Natural killer cell (primary cell): ENCODE measurements at regions of chr3 and their contacts with region 1.

Region 1: DNA sequence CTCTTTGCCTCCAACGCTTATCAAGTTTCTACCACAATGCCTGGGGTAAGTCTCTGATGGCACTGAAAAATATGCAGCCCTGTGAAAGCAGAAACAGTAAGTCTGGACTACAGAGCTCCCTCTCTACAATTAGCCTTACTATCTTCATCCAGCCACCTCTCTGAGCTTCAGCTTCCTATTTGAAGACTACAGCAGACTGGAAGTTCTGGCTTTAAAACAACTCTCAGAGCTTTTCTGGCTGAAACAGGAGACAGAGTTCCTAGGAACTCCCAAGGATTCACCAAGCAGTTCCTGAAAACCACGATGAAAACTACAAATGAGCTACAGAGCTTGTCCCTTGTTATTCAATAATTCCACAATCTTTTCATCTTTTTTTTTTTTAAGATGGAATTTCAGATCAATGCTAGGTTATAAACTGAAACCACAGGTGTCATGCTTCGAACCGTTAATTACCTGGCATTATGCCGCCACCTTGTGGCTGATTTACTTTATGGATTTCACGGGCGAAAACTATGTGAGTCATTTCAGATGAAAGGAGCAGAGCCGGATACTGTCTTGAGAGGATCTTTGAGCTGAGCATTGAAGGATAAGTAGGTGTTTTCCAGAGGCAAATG is 3.9 kb downstream of the CRYGS start:
- DNase-seq: peak; percentile 62 to 93
- ATAC-seq: peak; percentile 84 to 94 (median 94)
- H3K4me3 ChIP-seq: no peak overlapping the region
- H3K4me3 Mint-ChIP-seq: peak overlapping the region; percentile 26
- H3K27ac ChIP-seq: no peak overlapping the region
- H3K27ac Mint-ChIP-seq: peak overlapping the region in 1 of 2 donors; percentile 75
- H3K4me1 ChIP-seq: no peaks in the 10 kb centered on the region
- H3K4me1 Mint-ChIP-seq: peaks cover 8% of the 10 kb centered on the region in 2 donors
- H3K27me3 ChIP-seq: no peaks in the 10 kb centered on the region
- H3K27me3 Mint-ChIP-seq: no peaks in the 10 kb centered on the region
- CTCF ChIP-seq: peak; percentile 75

Region 2: GRCh38 chr3:185824476-185825378 is 715.6 kb before region 1 on chr3 and contains the start of gene IGF2BP2:
- intact Hi-C with region 1: no loop called
- DNase-seq: peak; percentile 51 to 55
- ATAC-seq: peak; percentile 67 to 78 (median 69)
- H3K4me3 ChIP-seq: peak within 1 kb of the TSS; percentile 61
- H3K4me3 Mint-ChIP-seq: peak within 1 kb of the TSS; percentile 92
- H3K27ac ChIP-seq: peak within 1 kb of the TSS; percentile 50
- H3K27ac Mint-ChIP-seq: peak within 1 kb of the TSS in 1 of 2 donors; percentile 82
- H3K4me1 ChIP-seq: peaks cover 23% of the 10 kb centered on the region
- H3K4me1 Mint-ChIP-seq: peaks cover 24 to 27% of the 10 kb centered on the region in 2 donors
- H3K27me3 ChIP-seq: peaks cover 32% of the 10 kb centered on the region
- H3K27me3 Mint-ChIP-seq: peaks cover 13 to 47% of the 10 kb centered on the region in 2 donors
- CTCF ChIP-seq: no peak
- total RNA-seq, gene IGF2BP2: 4.2 to 16.8 (median 8.8) TPM

Region 3: DNA sequence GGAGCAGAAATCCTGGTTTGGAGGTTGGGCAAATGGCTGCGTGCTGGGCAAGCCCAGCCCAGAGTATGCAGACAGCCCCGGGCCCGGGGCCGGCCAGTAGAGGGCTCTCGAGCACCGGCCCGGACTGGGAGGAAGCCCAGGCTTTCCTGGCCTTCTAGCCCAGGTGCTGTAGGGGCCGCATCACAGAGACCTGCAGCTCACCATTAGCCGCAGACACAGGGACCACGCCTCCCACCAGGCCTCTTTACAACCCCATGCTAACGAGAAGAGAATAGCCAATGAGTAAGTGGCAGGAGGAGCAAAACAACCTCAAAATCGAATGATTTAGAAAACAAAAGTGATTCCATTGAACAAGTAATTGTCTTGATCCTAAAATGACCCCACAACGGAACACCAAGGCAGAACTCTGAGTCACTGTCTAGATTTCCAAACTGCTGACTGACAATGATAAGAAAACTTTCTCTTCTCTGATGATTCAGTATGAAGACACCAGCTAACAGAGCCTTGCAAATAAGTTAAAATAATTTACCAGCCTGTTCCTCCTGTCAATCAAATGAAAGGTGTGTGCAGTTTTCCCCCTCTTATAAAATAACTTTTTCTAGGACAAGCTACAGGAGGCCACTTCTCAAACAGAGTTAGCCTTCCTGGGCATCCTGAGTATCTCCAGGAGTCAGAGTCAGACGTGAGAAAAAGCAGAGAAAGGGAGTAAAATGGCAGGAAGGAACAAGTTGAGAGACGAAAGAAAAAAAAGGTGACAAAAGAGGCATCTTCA is 280.5 kb before region 1 on chr3:
- intact Hi-C with region 1: loop called (anchors 1 kb)
- DNase-seq: peak; percentile 44 to 78
- ATAC-seq: peak; percentile 84 to 97 (median 97)
- H3K4me3 ChIP-seq: no peak overlapping the region
- H3K4me3 Mint-ChIP-seq: no peak overlapping the region
- H3K27ac ChIP-seq: no peak overlapping the region
- H3K27ac Mint-ChIP-seq: peak overlapping the region in 1 of 2 donors; percentile 29
- H3K4me1 ChIP-seq: peaks cover 22% of the 10 kb centered on the region
- H3K4me1 Mint-ChIP-seq: peaks cover 3 to 7% of the 10 kb centered on the region in 2 donors
- H3K27me3 ChIP-seq: no peaks in the 10 kb centered on the region
- H3K27me3 Mint-ChIP-seq: no peaks in the 10 kb centered on the region
- CTCF ChIP-seq: peak; percentile 61

Region 4: GRCh38 chr3:186464424-186465093 is 75.8 kb before region 1 on chr3:
- intact Hi-C with region 1: loop called (anchors 5 kb)
- DNase-seq: peak in 1 of 2 donors; percentile 23
- ATAC-seq: peak in 1 of 3 donors; percentile 38
- H3K4me3 ChIP-seq: no peak overlapping the region
- H3K4me3 Mint-ChIP-seq: no peak overlapping the region
- H3K27ac ChIP-seq: no peak overlapping the region
- H3K27ac Mint-ChIP-seq: no peak overlapping the region
- H3K4me1 ChIP-seq: no peaks in the 10 kb centered on the region
- H3K4me1 Mint-ChIP-seq: peaks cover 0 to 10% of the 10 kb centered on the region in 2 donors
- H3K27me3 ChIP-seq: no peaks in the 10 kb centered on the region
- H3K27me3 Mint-ChIP-seq: peaks cover 9 to 10% of the 10 kb centered on the region in 2 donors
- CTCF ChIP-seq: no peak